Left cardiac atrium (tissue), 4 donors: ENCODE measurements at regions of chr17 and their contacts with region 1.

Region 1: GRCh38 chr17:79796763-79797491 is at the start of gene CBX8:
- DNase-seq: peak; percentile 100
- ATAC-seq: peak; percentile 95
- total RNA-seq, gene CBX8: 4.1 to 5.9 TPM

Region 2: GRCh38 chr17:79741751-79742588 is 55.0 kb before region 1 on chr17:
- intact Hi-C with region 1: loop called in 1 of 2 experiments (anchors 10 kb)
- DNase-seq: peak; percentile 73
- ATAC-seq: peak; percentile 70 to 75

Region 3: DNA sequence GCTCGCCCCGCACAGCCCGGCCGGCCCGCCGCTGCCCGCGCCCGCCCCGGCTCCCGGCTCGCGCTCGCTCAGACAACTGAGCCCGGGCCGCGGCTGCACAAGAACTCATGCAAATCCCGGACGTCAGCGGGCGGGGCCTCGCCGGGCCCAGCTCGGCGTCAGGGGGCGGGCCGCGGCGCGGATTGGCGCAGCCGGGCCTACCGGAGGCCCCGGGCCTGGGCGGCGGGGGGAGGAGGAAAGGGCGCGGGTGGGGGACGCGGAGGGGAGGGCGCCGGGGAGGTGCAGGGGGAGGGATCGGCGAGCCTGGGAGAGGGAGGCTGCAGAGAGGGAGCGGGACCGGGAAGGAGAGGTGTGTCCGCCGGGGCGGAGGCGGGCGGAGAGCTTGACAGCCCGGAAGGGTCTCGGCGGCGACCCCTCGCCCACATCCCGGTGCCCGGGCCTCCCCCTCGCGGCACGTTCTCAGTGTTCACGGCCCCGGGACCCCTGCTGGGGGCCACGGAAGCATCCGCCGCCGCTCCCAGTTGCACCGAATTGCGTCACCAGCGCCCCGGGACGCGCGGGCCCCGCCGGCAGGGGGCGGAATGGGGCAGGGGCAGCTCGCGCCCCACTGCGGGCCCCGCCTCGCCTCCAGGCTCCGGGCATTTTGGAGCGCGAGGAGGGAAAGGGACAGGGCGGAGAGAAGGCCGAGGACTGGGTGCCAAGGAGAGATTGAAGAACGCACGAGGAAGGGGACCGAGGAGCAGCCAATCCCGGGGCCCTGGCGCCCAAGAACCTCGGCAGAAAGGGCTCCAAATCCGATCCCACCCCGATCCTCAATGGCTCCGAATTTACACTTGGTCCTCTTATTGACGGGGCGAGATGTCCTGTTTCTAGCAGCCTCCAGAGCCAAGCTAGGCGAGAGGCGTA is 42.7 kb after region 1 on chr17 and contains the start of gene CBX4:
- intact Hi-C with region 1: loop called in 1 of 2 experiments (anchors 5 kb)
- DNase-seq: peak; percentile 96
- ATAC-seq: peak; percentile 80 to 83
- total RNA-seq, gene CBX4: 17.9 to 24.2 TPM